Mucosa of descending colon (tissue), 3 donors: ENCODE measurements at regions of chr20 and their contacts with region 1.

Region 1: GRCh38 chr20:59087829-59088433 is 45.3 kb upstream of the PRELID3B start:
- DNase-seq: peak; percentile 73 to 96 (median 89)
- ATAC-seq: peak; percentile 92
- H3K4me3 ChIP-seq: no peak overlapping the region
- H3K4me1 ChIP-seq: no peaks in the 10 kb centered on the region
- CTCF ChIP-seq: peak; percentile 83

Region 2: DNA sequence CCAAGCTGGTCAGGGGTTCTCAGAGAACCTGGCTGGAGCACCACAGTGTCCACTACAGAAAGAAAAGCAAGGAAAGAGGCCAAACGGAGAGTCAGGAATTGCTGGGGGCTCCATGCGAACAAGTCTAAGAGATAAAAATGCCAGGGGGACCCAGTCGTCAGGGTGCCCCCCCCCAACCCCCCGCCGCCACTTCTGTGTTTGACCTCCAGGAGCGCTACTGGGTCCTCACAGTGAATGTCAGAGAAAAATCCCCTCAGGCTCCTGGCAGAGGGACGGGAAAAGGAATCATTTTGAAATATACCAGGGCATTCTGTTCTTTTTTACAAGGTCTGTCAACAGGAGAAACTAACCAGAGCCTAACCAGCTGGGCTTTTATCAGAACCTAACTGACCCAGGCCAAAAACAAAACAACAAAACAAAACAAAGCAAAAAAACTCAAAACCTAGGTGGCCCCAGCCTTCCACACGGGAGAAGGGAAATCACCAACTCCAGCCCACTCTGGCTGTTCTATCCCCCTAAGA is 124.8 kb before region 1 on chr20:
- intact Hi-C with region 1: no loop called
- DNase-seq: no peak
- ATAC-seq: no peak
- H3K4me3 ChIP-seq: no peak overlapping the region
- H3K4me1 ChIP-seq: no peaks in the 10 kb centered on the region
- CTCF ChIP-seq: no peak

Region 3: GRCh38 chr20:58976061-58977028 is 111.6 kb before region 1 on chr20:
- intact Hi-C with region 1: no loop called
- DNase-seq: no peak
- ATAC-seq: no peak
- H3K4me3 ChIP-seq: no peak overlapping the region
- H3K4me1 ChIP-seq: peaks cover 2% of the 10 kb centered on the region
- CTCF ChIP-seq: no peak

Region 4: DNA sequence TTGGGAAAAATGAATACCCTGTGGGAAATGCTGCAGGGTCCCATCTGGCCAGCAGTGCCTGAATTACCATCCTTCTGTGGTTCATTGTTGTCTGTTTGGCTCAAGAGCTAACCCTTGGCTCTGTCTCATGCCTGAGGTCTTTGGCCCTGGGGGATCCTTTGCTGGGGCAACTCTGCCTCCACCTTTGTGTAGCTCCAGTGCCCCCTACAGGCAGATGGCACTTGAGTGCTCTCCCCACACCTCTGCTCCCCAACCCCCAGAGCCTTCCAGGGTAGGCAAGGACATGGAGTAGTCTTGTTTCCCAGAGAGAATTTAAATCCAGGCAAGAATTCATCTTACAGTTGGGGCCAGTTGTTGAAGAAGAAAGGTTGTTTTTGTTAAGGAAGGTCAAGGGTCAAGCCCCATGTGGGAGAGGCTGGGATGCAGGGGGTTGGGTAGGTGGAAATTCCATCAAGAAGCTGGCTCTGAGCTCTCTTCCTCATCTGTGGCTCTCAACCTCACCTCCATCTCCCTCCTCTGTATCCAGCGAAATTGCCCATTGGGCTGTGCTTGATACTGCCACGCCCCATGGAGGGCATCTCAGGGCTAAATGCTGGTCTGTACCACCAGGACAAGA is 119.9 kb after region 1 on chr20:
- intact Hi-C with region 1: loop called in 1 of 2 experiments (anchors 2 kb)
- DNase-seq: peak; percentile 63 to 89 (median 81)
- ATAC-seq: peak; percentile 96
- H3K4me3 ChIP-seq: no peak overlapping the region
- H3K4me1 ChIP-seq: no peaks in the 10 kb centered on the region
- CTCF ChIP-seq: peak; percentile 38

Region 5: GRCh38 chr20:59322899-59323454 is 235.0 kb after region 1 on chr20:
- intact Hi-C with region 1: no loop called
- DNase-seq: no peak
- ATAC-seq: no peak
- H3K4me3 ChIP-seq: no peak overlapping the region
- H3K4me1 ChIP-seq: peaks cover 2% of the 10 kb centered on the region
- CTCF ChIP-seq: no peak

Region 6: GRCh38 chr20:59455402-59456341 is 367.7 kb after region 1 on chr20:
- intact Hi-C with region 1: loop called in 1 of 2 experiments (anchors 10 kb)
- DNase-seq: peak in 1 of 3 donors; percentile 27
- ATAC-seq: peak; percentile 36
- H3K4me3 ChIP-seq: no peak overlapping the region
- H3K4me1 ChIP-seq: no peaks in the 10 kb centered on the region
- CTCF ChIP-seq: no peak